Activated CD4-positive, alpha-beta T cell treated with anti-CD3 and anti-CD28 coated beads for 36 hours (primary cell): ENCODE measurements at regions of chr9 and their contacts with region 1.

Region 1: GRCh38 chr9:13128224-13128860 is 151.2 kb downstream of the MPDZ start:
- DNase-seq: no peak
- ATAC-seq: no peak
- H3K4me3 Mint-ChIP-seq: no peak overlapping the region
- H3K27ac Mint-ChIP-seq: no peak overlapping the region
- H3K4me1 Mint-ChIP-seq: no peaks in the 10 kb centered on the region
- H3K27me3 Mint-ChIP-seq: no peaks in the 10 kb centered on the region

Region 2: GRCh38 chr9:13181652-13182051 is 53.3 kb after region 1 on chr9:
- CTCF ChIA-PET with region 1: no interaction called
- POLR2A ChIA-PET with region 1: no interaction called
- intact Hi-C with region 1: loop called in 1 of 2 experiments (anchors 10 kb)
- DNase-seq: no peak
- ATAC-seq: no peak
- H3K4me3 Mint-ChIP-seq: no peak overlapping the region
- H3K27ac Mint-ChIP-seq: no peak overlapping the region
- H3K4me1 Mint-ChIP-seq: no peaks in the 10 kb centered on the region
- H3K27me3 Mint-ChIP-seq: no peaks in the 10 kb centered on the region